ENCODE measurements at regions of chr15 and their contacts with region 1.

Region 1: GRCh38 chr15:99704444-99704838 is 28.8 kb downstream of the LYSMD4 start:
- DNase-seq: no peak
- H3K4me3 ChIP-seq: no peak overlapping the region
- H3K27ac ChIP-seq: peak overlapping the region; percentile 72 to 78 (median 77)
- H3K4me1 ChIP-seq: peaks cover 43 to 61% (median 47%) of the 10 kb centered on the region in 4 donors
- H3K27me3 ChIP-seq: no peaks in the 10 kb centered on the region
- CTCF ChIP-seq: peak; percentile 75 to 84 (median 80)
- EP300 ChIP-seq: no peak
- POLR2A ChIP-seq: no peak

Region 2: DNA sequence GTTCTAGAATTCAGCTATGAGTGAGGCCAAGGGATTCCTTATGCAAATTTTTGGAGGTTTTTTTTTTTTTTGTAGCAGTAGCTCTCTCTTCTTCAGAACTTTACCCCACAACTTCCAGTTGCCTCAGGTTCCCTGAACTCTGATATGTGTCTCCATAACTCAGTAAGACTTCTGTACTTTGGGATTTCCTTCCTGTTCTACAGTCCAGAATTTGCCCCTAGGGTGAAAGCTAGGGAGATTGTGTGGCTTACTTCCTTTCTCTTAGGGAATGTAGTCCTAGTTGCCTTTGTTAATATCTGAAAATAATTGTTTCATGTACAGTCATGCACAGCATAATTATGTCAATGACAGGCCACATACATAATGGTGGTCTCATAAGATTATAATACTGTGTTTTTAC is 422.3 kb before region 1 on chr15:
- intact Hi-C with region 1: loop called (anchors 5 kb)
- DNase-seq: no peak
- H3K4me3 ChIP-seq: no peak overlapping the region
- H3K27ac ChIP-seq: no peak overlapping the region
- H3K4me1 ChIP-seq: peaks cover 4 to 7% (median 5%) of the 10 kb centered on the region in 4 donors
- H3K27me3 ChIP-seq: no peaks in the 10 kb centered on the region
- CTCF ChIP-seq: no peak
- EP300 ChIP-seq: no peak
- POLR2A ChIP-seq: no peak

Region 3: GRCh38 chr15:99409097-99409473 is 295.4 kb before region 1 on chr15:
- intact Hi-C with region 1: loop called (anchors 5 kb)
- DNase-seq: peak; percentile 92
- H3K4me3 ChIP-seq: no peak overlapping the region
- H3K27ac ChIP-seq: peak overlapping the region; percentile 6 to 71 (median 51)
- H3K4me1 ChIP-seq: peaks cover 18 to 25% (median 24%) of the 10 kb centered on the region in 4 donors
- H3K27me3 ChIP-seq: no peaks in the 10 kb centered on the region
- CTCF ChIP-seq: peak; percentile 39 to 63 (median 52)
- EP300 ChIP-seq: no peak
- POLR2A ChIP-seq: no peak

Region 4: GRCh38 chr15:99526176-99526575 is 178.3 kb before region 1 on chr15:
- intact Hi-C with region 1: no loop called
- DNase-seq: no peak
- H3K4me3 ChIP-seq: no peak overlapping the region
- H3K27ac ChIP-seq: no peak overlapping the region
- H3K4me1 ChIP-seq: no peaks in the 10 kb centered on the region
- H3K27me3 ChIP-seq: no peaks in the 10 kb centered on the region
- CTCF ChIP-seq: no peak
- EP300 ChIP-seq: no peak
- POLR2A ChIP-seq: no peak

Region 5: GRCh38 chr15:99692825-99693224 is 11.6 kb before region 1 on chr15:
- intact Hi-C with region 1: no loop called
- DNase-seq: no peak
- H3K4me3 ChIP-seq: no peak overlapping the region
- H3K27ac ChIP-seq: no peak overlapping the region
- H3K4me1 ChIP-seq: no peaks in the 10 kb centered on the region
- H3K27me3 ChIP-seq: no peaks in the 10 kb centered on the region
- CTCF ChIP-seq: no peak
- EP300 ChIP-seq: no peak
- POLR2A ChIP-seq: no peak

Measured in esophagus muscularis mucosa (tissue), 4 donors.